Activated T-helper 1 cell treated with anti-CD3 and anti-CD28 coated beads, Interleukin-12 subunit alpha, Interleukin-12 subunit beta, Interleukin-2, Interleukin-4 antibody, amounts not matched to agents 30 ng/mL and 10 ng/mL and 1 ng/mL, durations not matched to agents 14 hours and 24 hours and 36 hours (primary cell): ENCODE measurements at regions of chr2 and their contacts with region 1.

Region 1: GRCh38 chr2:108533832-108534583 is at the start of gene LIMS1:
- DNase-seq: peak; percentile 76
- H3K4me3 Mint-ChIP-seq: peak within 1 kb of the TSS; percentile 96
- H3K27ac Mint-ChIP-seq: peak within 1 kb of the TSS; percentile 97
- H3K4me1 Mint-ChIP-seq: peaks cover 65% of the 10 kb centered on the region
- H3K27me3 Mint-ChIP-seq: peaks cover 2% of the 10 kb centered on the region
- total RNA-seq, gene LIMS1: 69.6 and 70.0 TPM in 2 replicates

Region 2: GRCh38 chr2:108396845-108397244 is 137.2 kb before region 1 on chr2:
- intact Hi-C with region 1: no loop called
- DNase-seq: no peak
- H3K4me3 Mint-ChIP-seq: no peak overlapping the region
- H3K27ac Mint-ChIP-seq: no peak overlapping the region
- H3K4me1 Mint-ChIP-seq: no peaks in the 10 kb centered on the region
- H3K27me3 Mint-ChIP-seq: peaks cover 2% of the 10 kb centered on the region

Region 3: GRCh38 chr2:108565778-108566375 is 31.9 kb after region 1 on chr2:
- intact Hi-C with region 1: loop called (anchors 2 kb)
- DNase-seq: no peak
- H3K4me3 Mint-ChIP-seq: peak overlapping the region; percentile 37
- H3K27ac Mint-ChIP-seq: peak overlapping the region; percentile 65
- H3K4me1 Mint-ChIP-seq: peaks cover 21% of the 10 kb centered on the region
- H3K27me3 Mint-ChIP-seq: peaks cover 2% of the 10 kb centered on the region

Region 4: GRCh38 chr2:108621087-108621559 is 87.1 kb after region 1 on chr2:
- intact Hi-C with region 1: loop called (anchors 5 kb)
- DNase-seq: peak; percentile 75
- H3K4me3 Mint-ChIP-seq: peak overlapping the region; percentile 97
- H3K27ac Mint-ChIP-seq: peak overlapping the region; percentile 93
- H3K4me1 Mint-ChIP-seq: peaks cover 86% of the 10 kb centered on the region
- H3K27me3 Mint-ChIP-seq: no peaks in the 10 kb centered on the region

Region 5: DNA sequence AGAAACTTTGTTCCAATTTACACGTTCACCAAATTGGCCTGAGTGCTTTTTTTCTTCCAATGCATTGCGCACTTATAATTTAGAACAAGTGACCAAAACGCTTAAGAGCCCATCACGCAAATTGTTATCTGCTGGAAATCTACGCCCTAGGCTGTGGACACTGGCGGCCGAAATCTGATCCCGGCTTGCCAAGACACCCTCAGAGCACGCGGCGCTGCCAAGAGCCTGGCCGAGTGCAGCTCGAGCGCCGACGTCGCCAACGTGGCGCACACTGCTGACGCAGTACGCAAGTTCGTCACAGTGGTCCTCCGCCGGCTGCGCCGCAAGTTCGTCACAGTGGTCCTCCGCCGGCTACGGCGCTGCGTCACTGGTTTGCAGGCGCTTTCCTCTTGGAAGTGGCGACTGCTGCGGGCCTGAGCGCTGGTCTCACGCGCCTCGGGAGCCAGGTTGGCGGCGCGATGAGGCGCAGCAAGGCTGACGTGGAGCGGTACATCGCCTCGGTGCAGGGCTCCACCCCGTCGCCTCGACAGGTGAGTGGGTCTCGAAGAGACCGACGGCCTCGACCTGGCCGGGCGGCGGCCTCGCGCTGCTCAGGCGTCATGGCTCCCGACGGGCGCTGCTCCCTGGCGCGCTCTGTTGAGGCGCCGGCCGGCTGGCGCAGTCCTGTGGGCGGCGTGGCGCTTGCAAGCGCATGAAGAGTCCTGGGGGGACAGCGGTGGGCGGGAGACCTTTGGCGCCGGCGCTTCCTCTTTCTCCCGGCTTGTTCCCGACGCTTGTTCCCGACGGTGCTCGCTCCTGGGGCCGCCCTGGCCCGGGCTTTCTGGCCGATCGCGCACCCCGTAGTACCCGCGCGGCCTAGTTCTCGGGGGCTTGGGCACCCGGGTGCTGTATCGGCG is 185.4 kb after region 1 on chr2 and contains the start of gene RANBP2:
- intact Hi-C with region 1: loop called (anchors 1 kb)
- DNase-seq: peak; percentile 92
- H3K4me3 Mint-ChIP-seq: peak within 1 kb of the TSS; percentile 94
- H3K27ac Mint-ChIP-seq: peak within 1 kb of the TSS; percentile 99
- H3K4me1 Mint-ChIP-seq: peaks cover 16% of the 10 kb centered on the region
- H3K27me3 Mint-ChIP-seq: no peaks in the 10 kb centered on the region
- total RNA-seq, gene RANBP2: 68.0 and 74.1 TPM in 2 replicates